MCF 10A (cell line): ENCODE measurements at regions of chr11 and their contacts with region 1.

Region 1: GRCh38 chr11:19628018-19628417 is 84.6 kb upstream of the NAV2 start:
- DNase-seq: peak; percentile 99
- H3K4me3 Mint-ChIP-seq: peak overlapping the region; percentile 3
- H3K27ac Mint-ChIP-seq: peak overlapping the region; percentile 78
- H3K4me1 Mint-ChIP-seq: peaks cover 49% of the 10 kb centered on the region
- H3K27me3 Mint-ChIP-seq: no peaks in the 10 kb centered on the region
- CTCF ChIP-seq: no peak

Region 2: GRCh38 chr11:19595840-19596751 is 31.9 kb before region 1 on chr11:
- CTCF ChIA-PET with region 1: no interaction called
- POLR2A ChIA-PET with region 1: interaction called, 5 read pairs
- intact Hi-C with region 1: loop called (anchors 1 kb)
- DNase-seq: peak; percentile 94
- H3K4me3 Mint-ChIP-seq: peak overlapping the region; percentile 23
- H3K27ac Mint-ChIP-seq: peak overlapping the region; percentile 92
- H3K4me1 Mint-ChIP-seq: peaks cover 39% of the 10 kb centered on the region
- H3K27me3 Mint-ChIP-seq: no peaks in the 10 kb centered on the region
- CTCF ChIP-seq: no peak